MCF 10A (cell line): ENCODE measurements at regions of chr11 and their contacts with region 1.

Region 1: DNA sequence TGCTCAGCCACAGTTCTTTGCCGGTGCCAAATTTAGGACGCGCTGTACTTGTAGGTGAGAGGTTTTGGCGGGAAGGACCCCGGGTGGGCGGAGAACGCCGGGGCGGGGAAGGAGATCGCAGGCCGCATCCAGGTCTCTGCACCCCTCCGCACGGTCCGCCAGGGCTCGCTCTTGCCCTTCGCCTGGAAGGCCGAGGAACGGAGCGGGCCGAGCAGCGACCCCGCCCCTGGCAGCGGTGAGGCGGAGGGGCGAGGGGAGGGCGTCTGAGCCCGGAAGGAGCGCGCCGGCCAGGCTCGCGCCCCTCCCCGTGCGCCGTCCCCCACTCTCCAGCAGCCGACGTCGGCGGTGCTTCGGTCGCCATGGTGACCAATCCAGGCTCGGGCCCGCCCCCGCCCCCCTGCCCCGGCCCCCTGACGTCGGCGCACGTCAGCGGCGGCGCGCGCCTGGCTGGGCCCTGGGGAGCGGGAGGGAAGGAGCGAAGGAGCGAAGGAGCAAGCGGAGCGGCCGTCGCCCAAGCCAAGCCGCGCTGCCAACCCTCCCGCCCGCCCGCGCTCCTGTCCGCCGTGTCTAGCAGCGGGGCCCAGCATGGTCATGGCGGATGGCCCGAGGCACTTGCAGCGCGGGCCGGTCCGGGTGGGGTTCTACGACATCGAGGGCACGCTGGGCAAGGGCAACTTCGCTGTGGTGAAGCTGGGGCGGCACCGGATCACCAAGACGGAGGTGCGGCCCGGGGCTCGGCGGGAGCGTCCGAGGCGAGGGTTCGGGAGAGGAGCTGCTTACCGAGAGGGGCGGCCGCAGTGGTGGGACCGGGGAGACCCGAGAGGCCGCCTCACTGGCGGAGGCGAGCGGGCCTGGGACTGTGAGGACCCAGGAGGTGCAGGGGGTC is at the start of gene SIK2:
- DNase-seq: peak; percentile 92
- H3K4me3 Mint-ChIP-seq: peak within 1 kb of the TSS; percentile 99
- H3K27ac Mint-ChIP-seq: peak within 1 kb of the TSS; percentile 97
- H3K4me1 Mint-ChIP-seq: peaks cover 37% of the 10 kb centered on the region
- H3K27me3 Mint-ChIP-seq: no peaks in the 10 kb centered on the region
- CTCF ChIP-seq: peak; percentile 96
- total RNA-seq, gene SIK2: 13.7 and 18.6 TPM in 2 replicates

Region 2: GRCh38 chr11:111230122-111230465 is 372.1 kb before region 1 on chr11:
- CTCF ChIA-PET with region 1: no interaction called
- POLR2A ChIA-PET with region 1: no interaction called
- intact Hi-C with region 1: no loop called
- DNase-seq: no peak
- H3K4me3 Mint-ChIP-seq: peak overlapping the region; percentile 79
- H3K27ac Mint-ChIP-seq: peak overlapping the region; percentile 85
- H3K4me1 Mint-ChIP-seq: no peaks in the 10 kb centered on the region
- H3K27me3 Mint-ChIP-seq: peaks cover 40% of the 10 kb centered on the region
- CTCF ChIP-seq: no peak

Region 3: GRCh38 chr11:111469200-111469599 is 133.0 kb before region 1 on chr11:
- CTCF ChIA-PET with region 1: no interaction called
- POLR2A ChIA-PET with region 1: no interaction called
- intact Hi-C with region 1: no loop called
- DNase-seq: no peak
- H3K4me3 Mint-ChIP-seq: no peak overlapping the region
- H3K27ac Mint-ChIP-seq: no peak overlapping the region
- H3K4me1 Mint-ChIP-seq: peaks cover 10% of the 10 kb centered on the region
- H3K27me3 Mint-ChIP-seq: no peaks in the 10 kb centered on the region
- CTCF ChIP-seq: no peak

Region 4: GRCh38 chr11:111549196-111549868 is 52.9 kb before region 1 on chr11:
- CTCF ChIA-PET with region 1: no interaction called
- POLR2A ChIA-PET with region 1: no interaction called
- intact Hi-C with region 1: no loop called
- DNase-seq: no peak
- H3K4me3 Mint-ChIP-seq: no peak overlapping the region
- H3K27ac Mint-ChIP-seq: no peak overlapping the region
- H3K4me1 Mint-ChIP-seq: peaks cover 5% of the 10 kb centered on the region
- H3K27me3 Mint-ChIP-seq: no peaks in the 10 kb centered on the region
- CTCF ChIP-seq: no peak

Region 5: DNA sequence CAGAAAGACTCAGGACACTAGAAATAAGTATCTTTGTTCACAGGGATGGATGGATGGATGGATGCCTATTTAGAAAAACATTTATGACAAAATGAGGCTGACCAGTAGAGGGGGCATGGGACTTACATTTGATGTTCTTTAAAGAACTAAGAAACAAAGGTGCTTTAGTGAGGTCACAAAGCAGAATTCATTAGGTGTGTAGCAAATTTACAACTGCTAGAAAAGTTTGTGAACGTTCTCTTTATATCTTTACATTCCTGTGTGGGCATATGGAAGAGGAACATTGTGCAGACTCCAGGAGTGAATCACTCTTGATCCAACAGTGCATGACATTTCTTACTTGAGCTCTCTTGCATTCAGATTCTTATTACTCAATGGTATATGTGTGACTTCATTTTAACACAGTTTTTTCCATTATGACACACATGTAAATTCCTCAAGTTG is 15.8 kb before region 1 on chr11:
- CTCF ChIA-PET with region 1: interaction called, 10 read pairs
- POLR2A ChIA-PET with region 1: interaction called, 5 read pairs
- intact Hi-C with region 1: no loop called
- DNase-seq: peak; percentile 55
- H3K4me3 Mint-ChIP-seq: no peak overlapping the region
- H3K27ac Mint-ChIP-seq: no peak overlapping the region
- H3K4me1 Mint-ChIP-seq: no peaks in the 10 kb centered on the region
- H3K27me3 Mint-ChIP-seq: no peaks in the 10 kb centered on the region
- CTCF ChIP-seq: peak; percentile 40

Region 6: DNA sequence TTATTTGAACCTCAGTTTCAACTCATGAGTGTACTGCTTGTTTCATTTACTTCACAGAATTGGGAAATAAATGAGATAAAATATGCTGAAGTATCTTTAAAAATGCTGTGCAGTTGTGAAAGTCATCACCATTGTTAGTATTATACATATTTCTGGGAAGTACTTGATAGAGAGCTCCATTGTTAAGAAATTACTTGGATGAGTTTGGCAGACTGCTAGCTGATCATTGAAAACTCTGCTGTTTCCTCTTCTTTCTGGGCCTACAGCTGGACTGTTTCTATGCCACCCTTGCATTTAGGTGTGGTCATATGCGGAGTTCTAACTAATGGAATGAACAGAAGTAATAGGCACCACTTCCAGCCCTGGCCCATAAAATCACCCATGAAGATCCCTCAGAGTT is 10.0 kb after region 1 on chr11:
- CTCF ChIA-PET with region 1: interaction called, 9 read pairs
- POLR2A ChIA-PET with region 1: interaction called, 12 read pairs
- intact Hi-C with region 1: no loop called
- DNase-seq: no peak
- H3K4me3 Mint-ChIP-seq: no peak overlapping the region
- H3K27ac Mint-ChIP-seq: no peak overlapping the region
- H3K4me1 Mint-ChIP-seq: no peaks in the 10 kb centered on the region
- H3K27me3 Mint-ChIP-seq: no peaks in the 10 kb centered on the region
- CTCF ChIP-seq: no peak

Region 7: DNA sequence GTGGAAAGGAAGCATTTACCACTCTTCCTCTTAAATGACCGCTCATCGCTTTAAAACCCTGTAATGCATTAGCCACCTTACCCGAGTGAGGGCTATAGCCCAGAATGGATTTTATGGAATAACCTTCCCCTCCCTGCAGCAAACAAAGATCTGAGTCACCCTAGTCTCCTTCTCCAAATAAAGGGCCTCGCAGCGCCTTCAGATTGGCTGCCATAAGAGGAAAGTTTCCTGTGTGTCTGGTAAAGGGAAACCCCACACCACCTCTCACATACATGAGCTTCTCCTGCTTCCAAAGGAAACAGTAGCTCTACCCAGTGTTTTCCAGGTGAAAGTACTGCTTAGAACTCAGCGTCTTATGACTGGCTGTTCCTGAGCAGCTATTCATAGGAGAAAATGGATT is 116.2 kb after region 1 on chr11:
- CTCF ChIA-PET with region 1: interaction called, 10 read pairs
- POLR2A ChIA-PET with region 1: no interaction called
- intact Hi-C with region 1: loop called (anchors 5 kb)
- DNase-seq: peak; percentile 81
- H3K4me3 Mint-ChIP-seq: no peak overlapping the region
- H3K27ac Mint-ChIP-seq: peak overlapping the region; percentile 89
- H3K4me1 Mint-ChIP-seq: peaks cover 26% of the 10 kb centered on the region
- H3K27me3 Mint-ChIP-seq: no peaks in the 10 kb centered on the region
- CTCF ChIP-seq: no peak

Region 8: DNA sequence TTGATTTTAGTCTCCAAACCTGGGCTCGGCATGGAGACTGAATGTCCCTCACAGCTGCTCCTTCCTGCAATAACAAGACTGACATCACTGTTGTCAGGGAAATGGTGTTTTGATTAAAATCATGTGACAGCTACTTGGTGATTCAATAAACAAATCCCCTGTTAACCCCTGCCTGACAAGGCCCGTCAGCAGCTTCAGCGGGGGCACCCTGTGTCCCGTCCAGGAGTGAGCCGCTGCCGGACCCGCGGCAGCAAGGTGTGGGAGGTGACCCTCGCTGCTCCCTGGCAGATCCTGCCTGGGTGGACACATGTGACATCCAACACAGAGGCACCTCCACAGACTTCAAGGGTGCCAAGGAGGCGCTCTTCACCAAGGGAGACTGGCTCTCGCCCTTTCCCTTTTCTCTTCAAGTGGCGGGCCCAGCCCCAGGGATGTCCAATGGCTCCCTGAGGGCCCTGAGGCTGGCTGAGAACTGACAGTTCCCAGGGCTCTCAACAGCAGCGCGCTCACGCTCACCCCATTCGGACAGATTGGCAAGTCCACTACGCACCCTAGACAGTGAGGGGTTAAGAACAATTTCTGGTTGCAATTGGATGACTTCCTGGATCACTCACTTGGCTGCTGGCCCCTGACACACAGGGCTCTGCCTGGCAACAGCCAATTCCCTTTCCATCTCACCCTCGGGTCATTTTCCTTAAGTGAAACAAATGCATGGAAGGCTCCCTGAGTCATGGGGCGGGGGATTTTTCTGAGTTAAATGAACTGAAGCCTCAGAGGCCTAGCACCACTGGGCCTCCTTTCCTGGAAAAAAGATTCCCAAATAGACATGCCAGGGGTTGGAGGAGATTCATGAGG is 133.3 kb after region 1 on chr11:
- CTCF ChIA-PET with region 1: interaction called, 6 read pairs
- POLR2A ChIA-PET with region 1: interaction called, 17 read pairs
- intact Hi-C with region 1: loop called (anchors 1 kb)
- DNase-seq: peak; percentile 99
- H3K4me3 Mint-ChIP-seq: peak overlapping the region; percentile 71
- H3K27ac Mint-ChIP-seq: peak overlapping the region; percentile 99
- H3K4me1 Mint-ChIP-seq: peaks cover 27% of the 10 kb centered on the region
- H3K27me3 Mint-ChIP-seq: no peaks in the 10 kb centered on the region
- CTCF ChIP-seq: no peak

Region 9: GRCh38 chr11:111777094-111778046 is 175.1 kb after region 1 on chr11:
- CTCF ChIA-PET with region 1: interaction called, 49 read pairs
- POLR2A ChIA-PET with region 1: interaction called, 18 read pairs
- intact Hi-C with region 1: loop called (anchors 1 kb)
- DNase-seq: peak; percentile 79
- H3K4me3 Mint-ChIP-seq: no peak overlapping the region
- H3K27ac Mint-ChIP-seq: no peak overlapping the region
- H3K4me1 Mint-ChIP-seq: no peaks in the 10 kb centered on the region
- H3K27me3 Mint-ChIP-seq: no peaks in the 10 kb centered on the region
- CTCF ChIP-seq: peak; percentile 54

Region 10: GRCh38 chr11:111841370-111842053 is 239.3 kb after region 1 on chr11:
- CTCF ChIA-PET with region 1: interaction called, 3 read pairs
- POLR2A ChIA-PET with region 1: interaction called, 5 read pairs
- intact Hi-C with region 1: loop called (anchors 1 kb)
- DNase-seq: peak; percentile 82
- H3K4me3 Mint-ChIP-seq: no peak overlapping the region
- H3K27ac Mint-ChIP-seq: no peak overlapping the region
- H3K4me1 Mint-ChIP-seq: no peaks in the 10 kb centered on the region
- H3K27me3 Mint-ChIP-seq: no peaks in the 10 kb centered on the region
- CTCF ChIP-seq: peak; percentile 79